Mammary epithelial cell (primary cell): ENCODE measurements at regions of chr1 and their contacts with region 1.

Region 1: GRCh38 chr1:224052772-224053171 is 61.1 kb upstream of the FBXO28 start:
- DNase-seq: peak; percentile 52
- H3K4me3 ChIP-seq: no peak overlapping the region
- H3K27ac ChIP-seq: no peak overlapping the region
- H3K4me1 ChIP-seq: peaks cover 17% of the 10 kb centered on the region
- H3K27me3 ChIP-seq: no peaks in the 10 kb centered on the region
- CTCF ChIP-seq: no peak

Region 2: GRCh38 chr1:223695941-223696340 is 356.8 kb before region 1 on chr1:
- CTCF ChIA-PET with region 1: no interaction called
- dilution Hi-C with region 1: no loop called
- in situ Hi-C with region 1: no loop called
- intact Hi-C with region 1: loop called (anchors 5 kb)
- DNase-seq: no peak
- H3K4me3 ChIP-seq: no peak overlapping the region
- H3K27ac ChIP-seq: no peak overlapping the region
- H3K4me1 ChIP-seq: peaks cover 19% of the 10 kb centered on the region
- H3K27me3 ChIP-seq: no peaks in the 10 kb centered on the region
- CTCF ChIP-seq: no peak

Region 3: GRCh38 chr1:223802602-223803001 is 250.2 kb before region 1 on chr1:
- CTCF ChIA-PET with region 1: no interaction called
- dilution Hi-C with region 1: no loop called
- in situ Hi-C with region 1: no loop called
- intact Hi-C with region 1: no loop called
- DNase-seq: no peak
- H3K4me3 ChIP-seq: no peak overlapping the region
- H3K27ac ChIP-seq: no peak overlapping the region
- H3K4me1 ChIP-seq: no peaks in the 10 kb centered on the region
- H3K27me3 ChIP-seq: no peaks in the 10 kb centered on the region
- CTCF ChIP-seq: no peak

Region 4: DNA sequence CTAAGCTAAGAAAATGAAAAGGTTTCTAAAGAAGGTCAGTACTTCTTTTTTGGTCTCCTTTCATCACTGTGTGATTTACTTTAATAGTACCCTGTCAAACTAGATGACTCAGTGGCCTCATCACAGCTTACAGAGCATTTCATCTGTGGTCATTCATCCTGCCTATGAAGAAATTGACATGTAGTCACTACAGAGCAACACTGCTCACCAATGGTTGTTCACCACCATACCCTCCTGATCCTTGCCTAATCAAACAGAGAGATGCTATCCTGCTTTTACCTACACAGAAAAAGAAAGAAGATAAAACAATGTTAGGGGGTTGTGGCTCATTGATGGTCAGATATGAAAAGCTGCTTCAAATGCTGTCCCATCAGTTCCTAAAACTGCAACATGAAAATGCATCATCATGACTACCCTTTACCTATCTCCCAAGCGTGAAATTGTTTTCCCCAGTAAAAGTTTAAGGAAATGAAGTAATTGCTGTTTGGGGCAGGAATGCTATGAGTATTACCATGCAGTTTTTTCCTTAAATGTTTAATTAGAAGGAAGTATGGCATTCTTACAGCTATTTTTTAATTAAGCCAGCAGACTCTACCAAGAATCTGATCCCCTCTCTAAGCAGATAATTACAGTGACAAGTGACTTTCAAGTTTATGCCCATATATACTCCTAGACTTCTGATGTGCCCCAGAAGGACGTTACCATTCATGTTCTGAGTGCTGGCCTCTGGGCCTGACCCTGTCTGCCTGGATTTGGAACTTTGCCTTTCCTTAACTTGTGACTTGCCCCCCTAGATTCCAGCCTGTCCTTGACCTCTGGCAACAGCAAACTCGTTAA is 15.1 kb after region 1 on chr1:
- CTCF ChIA-PET with region 1: interaction called, 16 read pairs
- dilution Hi-C with region 1: no loop called
- in situ Hi-C with region 1: no loop called
- intact Hi-C with region 1: no loop called
- DNase-seq: peak; percentile 86
- H3K4me3 ChIP-seq: no peak overlapping the region
- H3K27ac ChIP-seq: peak overlapping the region; percentile 34
- H3K4me1 ChIP-seq: peaks cover 22% of the 10 kb centered on the region
- H3K27me3 ChIP-seq: no peaks in the 10 kb centered on the region
- CTCF ChIP-seq: no peak

Region 5: DNA sequence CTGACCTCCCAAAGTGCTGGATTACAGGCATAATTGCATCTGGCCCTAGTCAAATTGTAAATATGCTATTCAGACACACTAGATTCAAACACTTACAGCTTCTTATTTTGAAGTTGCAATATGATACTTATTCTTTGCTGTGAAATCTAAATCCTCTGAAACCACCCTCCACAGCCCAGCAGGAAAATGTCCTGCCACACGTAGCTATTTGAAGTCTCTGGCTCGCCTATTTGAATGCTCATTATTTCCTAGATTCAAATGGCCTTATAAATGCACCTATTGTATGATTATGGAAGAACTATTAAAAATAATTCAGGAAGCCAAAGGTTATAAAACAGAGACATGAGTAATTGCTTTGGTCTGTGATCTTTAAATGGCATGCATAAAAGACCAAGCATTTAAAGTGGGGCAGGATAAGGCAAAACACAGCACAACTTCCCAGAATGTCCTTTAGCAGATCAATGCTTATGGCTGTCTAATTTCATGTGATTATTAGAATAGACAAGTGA is 34.6 kb after region 1 on chr1:
- CTCF ChIA-PET with region 1: no interaction called
- dilution Hi-C with region 1: no loop called
- in situ Hi-C with region 1: no loop called
- intact Hi-C with region 1: no loop called
- DNase-seq: no peak
- H3K4me3 ChIP-seq: no peak overlapping the region
- H3K27ac ChIP-seq: no peak overlapping the region
- H3K4me1 ChIP-seq: no peaks in the 10 kb centered on the region
- H3K27me3 ChIP-seq: no peaks in the 10 kb centered on the region
- CTCF ChIP-seq: no peak

Region 6: DNA sequence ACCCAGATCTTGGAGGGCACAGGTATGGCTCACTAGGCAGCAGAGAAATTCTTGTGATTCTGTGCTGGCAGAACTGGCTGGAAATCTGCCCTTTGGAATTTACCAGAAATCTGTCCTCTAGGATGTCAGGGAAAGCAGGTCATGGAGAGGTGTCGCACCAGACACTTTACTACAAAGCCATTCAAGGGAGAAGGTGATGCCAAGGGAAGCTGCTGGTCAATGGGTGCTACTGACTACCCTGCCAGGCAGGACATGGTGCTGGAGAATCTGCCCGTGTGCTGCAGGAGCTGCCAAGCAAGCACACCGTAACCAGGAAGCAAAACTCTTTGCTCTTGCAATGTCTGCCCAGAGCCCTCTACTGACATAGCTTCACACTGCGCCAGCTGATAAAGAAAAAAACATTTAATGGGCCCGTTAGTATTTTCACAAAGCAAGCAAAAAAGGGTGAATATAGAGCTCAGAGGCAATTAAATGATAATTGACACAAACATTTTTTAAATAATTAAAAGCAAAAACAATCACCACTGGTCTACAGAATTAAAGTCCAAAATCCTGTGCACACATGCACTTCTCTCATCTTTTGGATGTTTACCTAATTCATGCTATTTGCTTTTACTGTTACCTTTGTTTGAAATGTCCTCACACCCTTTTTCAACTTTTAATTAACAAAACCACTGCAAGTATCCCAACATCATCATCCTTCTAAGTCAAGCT is 54.0 kb after region 1 on chr1:
- CTCF ChIA-PET with region 1: interaction called, 11 read pairs
- dilution Hi-C with region 1: no loop called
- in situ Hi-C with region 1: no loop called
- intact Hi-C with region 1: loop called (anchors 2 kb)
- DNase-seq: peak; percentile 52
- H3K4me3 ChIP-seq: no peak overlapping the region
- H3K27ac ChIP-seq: no peak overlapping the region
- H3K4me1 ChIP-seq: peaks cover 4% of the 10 kb centered on the region
- H3K27me3 ChIP-seq: no peaks in the 10 kb centered on the region
- CTCF ChIP-seq: peak; percentile 55 to 74